Activated CD4-positive, alpha-beta T cell treated with anti-CD3 and anti-CD28 coated beads, Interleukin-2, amount 10 ng/mL, durations not matched to agents 24 days and 14 days (primary cell): ENCODE measurements at regions of chr13 and their contacts with region 1.

Region 1: DNA sequence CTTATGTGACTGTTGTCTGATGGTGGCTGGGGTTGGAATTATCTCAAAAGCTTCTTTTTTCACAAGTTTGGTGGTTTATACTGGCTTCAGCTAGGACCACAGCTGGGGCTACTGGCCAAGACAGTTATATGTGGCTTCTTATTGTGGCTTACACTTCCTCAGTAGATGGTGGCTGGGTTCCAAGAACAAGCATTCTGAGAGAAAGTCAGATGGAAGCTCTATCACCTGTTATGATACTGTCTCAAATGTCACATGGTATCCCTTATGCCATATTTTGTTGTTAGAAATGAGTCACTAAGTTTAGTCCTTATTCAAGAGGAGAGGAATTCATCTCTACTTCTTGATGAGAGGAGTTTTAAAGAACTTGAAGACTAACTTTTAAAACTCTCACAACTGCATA is 41.6 kb downstream of the NDFIP2 start:
- DNase-seq: peak; percentile 87
- H3K4me3 Mint-ChIP-seq: peak overlapping the region; percentile 75
- H3K27ac Mint-ChIP-seq: peak overlapping the region; percentile 96
- H3K4me1 Mint-ChIP-seq: peaks cover 29% of the 10 kb centered on the region
- H3K27me3 Mint-ChIP-seq: no peaks in the 10 kb centered on the region

Region 2: DNA sequence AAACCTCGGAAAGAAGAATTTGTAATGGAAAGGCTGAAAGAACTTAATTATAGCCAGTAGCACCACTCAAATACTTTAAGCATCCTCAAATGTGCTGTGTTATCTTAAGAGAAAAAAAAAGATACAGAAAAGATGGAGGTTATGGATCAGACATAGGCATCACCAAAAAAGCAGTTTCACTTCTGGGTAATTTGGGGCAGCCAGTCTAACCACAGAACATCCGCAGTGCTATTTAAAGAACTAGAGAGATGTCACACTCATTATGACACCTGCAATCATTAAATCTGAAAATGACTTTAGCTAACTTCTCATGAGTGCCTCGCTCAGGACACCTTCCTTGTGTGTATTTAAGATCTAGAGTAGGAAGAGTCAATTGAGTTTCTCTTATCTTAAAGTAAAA is 328.3 kb before region 1 on chr13:
- intact Hi-C with region 1: loop called (anchors 10 kb)
- DNase-seq: peak; percentile 89
- H3K4me3 Mint-ChIP-seq: peak overlapping the region; percentile 60
- H3K27ac Mint-ChIP-seq: peak overlapping the region; percentile 39
- H3K4me1 Mint-ChIP-seq: peaks cover 50% of the 10 kb centered on the region
- H3K27me3 Mint-ChIP-seq: peaks cover 2% of the 10 kb centered on the region

Region 3: GRCh38 chr13:79451500-79451962 is 71.1 kb before region 1 on chr13:
- intact Hi-C with region 1: loop called (anchors 1 kb)
- DNase-seq: peak; percentile 96
- H3K4me3 Mint-ChIP-seq: peak overlapping the region; percentile 86
- H3K27ac Mint-ChIP-seq: peak overlapping the region; percentile 99
- H3K4me1 Mint-ChIP-seq: peaks cover 66% of the 10 kb centered on the region
- H3K27me3 Mint-ChIP-seq: no peaks in the 10 kb centered on the region

Region 4: GRCh38 chr13:79486433-79487188 is 36.0 kb before region 1 on chr13:
- intact Hi-C with region 1: loop called (anchors 1 kb)
- DNase-seq: no peak
- H3K4me3 Mint-ChIP-seq: peak overlapping the region; percentile 69
- H3K27ac Mint-ChIP-seq: peak overlapping the region; percentile 94
- H3K4me1 Mint-ChIP-seq: peaks cover 74% of the 10 kb centered on the region
- H3K27me3 Mint-ChIP-seq: peaks cover 2% of the 10 kb centered on the region

Region 5: GRCh38 chr13:79501538-79502232 is 20.9 kb before region 1 on chr13:
- intact Hi-C with region 1: loop called (anchors 1 kb)
- DNase-seq: peak; percentile 55
- H3K4me3 Mint-ChIP-seq: peak overlapping the region; percentile 56
- H3K27ac Mint-ChIP-seq: peak overlapping the region; percentile 90
- H3K4me1 Mint-ChIP-seq: peaks cover 75% of the 10 kb centered on the region
- H3K27me3 Mint-ChIP-seq: no peaks in the 10 kb centered on the region

Region 6: GRCh38 chr13:79508224-79508961 is 14.2 kb before region 1 on chr13:
- intact Hi-C with region 1: loop called (anchors 1 kb)
- DNase-seq: peak; percentile 52
- H3K4me3 Mint-ChIP-seq: no peak overlapping the region
- H3K27ac Mint-ChIP-seq: peak overlapping the region; percentile 48
- H3K4me1 Mint-ChIP-seq: peaks cover 60% of the 10 kb centered on the region
- H3K27me3 Mint-ChIP-seq: no peaks in the 10 kb centered on the region

Region 7: DNA sequence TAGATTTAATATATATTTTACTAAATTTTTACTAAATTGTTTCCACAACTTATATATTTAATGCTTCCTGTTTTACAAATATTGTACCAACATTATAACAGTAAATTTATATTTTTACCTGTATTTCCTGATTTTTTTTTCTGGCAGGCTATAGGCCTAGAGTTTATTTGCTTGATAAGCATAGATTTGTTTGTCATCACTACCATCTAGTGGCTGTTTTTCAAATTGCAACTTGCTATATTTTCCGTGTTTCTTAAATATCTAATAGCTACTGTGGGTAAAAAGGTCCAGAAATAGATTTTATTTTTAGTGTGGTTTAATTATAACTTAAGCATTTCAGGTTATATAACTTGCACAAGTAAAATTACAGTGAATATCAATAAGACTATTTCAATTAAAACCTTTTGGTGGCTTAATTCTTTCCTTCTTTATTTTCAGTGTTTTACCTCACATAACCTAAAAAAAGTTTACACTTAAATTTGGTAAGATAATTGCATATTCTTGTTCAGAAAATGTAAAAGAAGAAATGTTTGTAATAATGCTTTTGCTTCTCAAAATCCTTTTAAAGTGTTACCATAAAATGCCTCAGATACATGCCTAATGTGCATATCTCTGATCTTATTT is 19.0 kb after region 1 on chr13:
- intact Hi-C with region 1: loop called (anchors 2 kb)
- DNase-seq: peak; percentile 77
- H3K4me3 Mint-ChIP-seq: no peak overlapping the region
- H3K27ac Mint-ChIP-seq: no peak overlapping the region
- H3K4me1 Mint-ChIP-seq: peaks cover 19% of the 10 kb centered on the region
- H3K27me3 Mint-ChIP-seq: no peaks in the 10 kb centered on the region

Region 8: DNA sequence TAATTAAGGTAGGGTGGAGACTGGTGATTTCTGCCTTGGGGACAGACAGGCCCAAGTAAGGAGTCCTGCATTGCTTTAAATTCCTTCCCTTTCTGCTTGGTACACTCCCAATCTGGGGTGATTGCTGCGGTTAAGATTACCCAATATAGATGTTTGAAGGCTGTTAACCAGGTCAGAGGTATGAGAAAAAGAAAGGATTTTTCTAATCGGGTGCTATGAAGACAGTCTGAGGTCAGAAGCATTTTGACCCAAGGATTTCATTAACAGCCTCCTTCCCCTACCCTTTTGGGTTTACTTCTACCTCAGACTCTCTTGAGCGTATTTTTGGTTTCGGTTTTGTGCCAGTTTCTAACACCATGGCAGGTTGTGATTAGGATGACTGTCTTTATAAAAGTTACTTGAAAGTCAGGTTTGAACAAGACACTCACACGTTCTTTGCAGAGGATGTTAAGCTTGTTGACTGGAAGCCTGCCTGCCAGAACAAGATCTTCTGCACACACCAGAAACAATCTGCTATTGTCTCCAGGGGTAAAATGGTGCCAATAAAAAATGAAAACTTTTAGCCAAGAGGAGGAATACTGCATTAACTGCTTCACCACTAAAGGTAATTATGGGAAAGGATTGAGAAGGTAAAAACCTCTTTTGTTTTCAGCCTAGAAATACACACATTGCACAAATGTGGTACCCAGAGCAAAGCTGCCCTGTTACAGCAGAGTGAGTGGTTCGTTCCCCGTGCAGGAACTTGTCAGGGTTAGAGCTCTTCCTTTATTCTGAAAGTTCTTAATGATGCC is 67.2 kb after region 1 on chr13:
- intact Hi-C with region 1: no loop called
- DNase-seq: no peak
- H3K4me3 Mint-ChIP-seq: no peak overlapping the region
- H3K27ac Mint-ChIP-seq: no peak overlapping the region
- H3K4me1 Mint-ChIP-seq: no peaks in the 10 kb centered on the region
- H3K27me3 Mint-ChIP-seq: no peaks in the 10 kb centered on the region